Common myeloid progenitor, CD34-positive (primary cell): ENCODE measurements at regions of chr2 and their contacts with region 1.

Region 1: DNA sequence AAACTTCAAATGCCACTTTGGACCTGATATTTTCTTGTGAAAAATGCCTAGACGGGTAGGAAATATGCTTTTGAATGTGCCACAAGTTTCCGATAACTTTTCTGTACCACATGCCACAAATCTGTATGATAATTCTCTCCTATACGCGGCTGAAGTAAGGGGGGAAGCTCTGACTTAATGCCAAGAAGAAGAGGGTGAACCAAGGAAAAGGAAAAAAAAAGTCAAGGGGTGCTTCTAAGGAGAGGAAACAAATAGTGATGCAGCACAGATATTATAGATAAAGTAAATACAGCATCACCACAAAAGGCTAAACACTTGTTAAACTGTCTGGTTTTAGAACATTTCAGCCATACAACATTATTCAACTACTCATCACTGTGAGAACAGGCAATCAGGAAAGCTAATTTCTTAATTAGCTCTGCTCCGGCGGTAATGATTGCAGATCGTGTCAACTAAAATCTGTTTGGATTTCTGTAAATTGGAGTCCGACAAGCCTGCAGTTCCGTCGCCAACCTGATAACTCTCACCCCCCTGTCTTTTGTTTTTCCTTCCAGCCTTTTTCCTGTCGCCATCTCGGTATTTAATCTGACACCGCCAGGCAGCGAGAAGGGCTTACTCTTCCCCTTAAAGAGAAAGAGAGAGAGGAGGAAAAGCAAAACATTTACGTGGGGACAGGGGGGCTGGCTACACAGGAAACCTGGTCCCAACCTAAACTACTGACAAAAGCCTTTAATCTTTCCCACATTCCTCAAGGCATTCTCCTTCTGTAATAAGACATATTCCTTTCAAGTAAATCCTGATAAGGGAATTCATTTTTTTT is 67.5 kb downstream of the ZEB2 start:
- DNase-seq: peak; percentile 66 to 86 (median 77)
- H3K4me3 ChIP-seq: peak overlapping the region in 5 of 7 experiments; percentile 12 to 66 (median 40)
- H3K27ac ChIP-seq: peak overlapping the region in 1 of 2 experiments; percentile 78
- H3K4me1 ChIP-seq: peaks cover 36 to 60% (median 47%) of the 10 kb centered on the region in 4 experiments
- H3K27me3 ChIP-seq: no peaks in the 10 kb centered on the region

Region 2: DNA sequence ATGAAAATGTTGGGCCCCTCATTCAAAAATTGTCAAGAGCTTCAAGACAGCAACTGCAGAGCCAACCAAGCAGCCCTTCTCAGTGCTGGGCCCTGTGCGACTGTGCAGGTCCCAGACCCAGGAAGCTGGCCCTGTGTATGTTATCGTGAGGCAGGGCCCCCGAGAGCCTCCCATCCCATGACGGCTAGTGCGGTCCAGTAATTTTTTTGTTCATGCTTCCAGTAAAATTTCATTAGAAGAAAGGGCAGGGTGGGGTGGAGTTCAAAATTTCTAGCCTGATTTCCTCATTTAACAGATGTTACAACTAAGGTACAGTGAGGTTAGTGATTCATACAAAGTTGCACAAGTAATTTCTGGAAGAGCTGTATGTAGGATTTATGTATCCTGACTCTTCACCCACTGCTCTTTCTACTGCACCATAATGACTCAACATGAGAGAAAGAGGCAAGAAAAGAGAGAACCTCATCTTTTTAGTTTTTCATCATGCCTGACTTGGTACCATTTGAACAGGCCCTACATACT is 38.0 kb before region 1 on chr2:
- CTCF ChIA-PET with region 1: no interaction called
- POLR2A ChIA-PET with region 1: no interaction called
- DNase-seq: peak; percentile 21 to 78 (median 69)
- H3K4me3 ChIP-seq: no peak overlapping the region
- H3K27ac ChIP-seq: peak overlapping the region in 1 of 2 experiments; percentile 14
- H3K4me1 ChIP-seq: peaks cover 0 to 8% (median 3%) of the 10 kb centered on the region in 4 experiments
- H3K27me3 ChIP-seq: no peaks in the 10 kb centered on the region

Region 3: DNA sequence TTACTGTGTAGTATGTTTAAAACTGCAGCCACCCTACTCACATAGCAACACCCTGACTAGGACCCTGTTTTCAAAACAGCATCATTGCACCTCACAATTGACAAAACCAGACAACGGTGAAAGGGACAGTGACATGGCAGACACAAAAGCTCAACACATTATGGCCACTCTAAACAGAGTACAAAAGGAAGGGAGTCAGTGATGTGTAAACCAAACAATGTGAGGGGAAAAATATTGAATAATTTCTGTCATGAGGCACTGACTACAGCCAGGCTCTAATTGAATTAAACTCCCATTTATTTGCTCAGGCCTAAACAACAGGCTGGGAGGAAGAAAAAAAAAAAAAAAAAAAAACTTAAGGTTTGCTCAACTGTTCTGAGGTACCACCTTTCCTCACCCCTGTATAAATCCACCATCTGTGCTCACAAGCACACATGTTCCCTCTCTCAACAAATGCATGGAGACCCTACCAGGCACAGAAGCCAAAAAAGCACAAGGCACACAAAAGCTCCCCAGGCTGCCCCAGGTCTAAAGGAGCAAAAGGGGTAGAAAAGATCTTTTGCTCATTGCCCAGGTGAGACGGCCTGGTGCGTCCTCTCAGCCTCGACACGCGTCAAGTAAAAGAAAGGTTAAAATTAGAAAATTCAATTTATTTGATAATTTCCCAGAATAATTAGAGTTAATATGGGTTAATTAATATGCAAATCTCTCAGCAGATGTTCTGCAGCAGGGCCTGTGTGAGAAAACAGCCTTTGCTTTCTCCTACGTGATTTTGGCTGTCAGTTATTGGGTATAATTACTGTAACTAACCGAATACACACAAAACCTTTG is 13.4 kb before region 1 on chr2:
- CTCF ChIA-PET with region 1: interaction called, 12 read pairs
- POLR2A ChIA-PET with region 1: interaction called, 9 read pairs
- DNase-seq: no peak
- H3K4me3 ChIP-seq: no peak overlapping the region
- H3K27ac ChIP-seq: peak overlapping the region in 1 of 2 experiments; percentile 2
- H3K4me1 ChIP-seq: peaks cover 19 to 38% (median 24%) of the 10 kb centered on the region in 4 experiments
- H3K27me3 ChIP-seq: no peaks in the 10 kb centered on the region

Region 4: DNA sequence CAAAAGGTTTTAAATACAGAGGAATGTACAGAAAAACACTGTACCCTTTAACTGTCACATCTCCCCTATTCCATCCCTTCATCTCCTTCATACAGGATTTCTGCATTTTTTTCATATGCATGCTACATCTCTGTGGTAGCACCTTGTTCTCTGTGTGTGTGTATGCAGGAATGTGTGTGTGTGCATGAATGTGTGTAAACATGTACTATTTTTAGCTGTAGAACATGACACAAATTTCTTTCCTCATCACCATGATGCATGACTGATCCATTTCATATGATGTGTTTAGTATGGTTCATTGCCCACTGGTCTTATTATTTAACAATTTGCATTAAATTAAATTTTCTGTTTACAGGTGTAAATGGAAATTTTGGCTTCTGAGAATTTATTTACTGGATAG is 89.0 kb after region 1 on chr2:
- CTCF ChIA-PET with region 1: no interaction called
- POLR2A ChIA-PET with region 1: no interaction called
- DNase-seq: no peak
- H3K4me3 ChIP-seq: no peak overlapping the region
- H3K27ac ChIP-seq: no peak overlapping the region
- H3K4me1 ChIP-seq: no peaks in the 10 kb centered on the region
- H3K27me3 ChIP-seq: no peaks in the 10 kb centered on the region